ENCODE measurements at regions of chr3 and their contacts with region 1.

Region 1: GRCh38 chr3:9503283-9503682 is 50.3 kb downstream of the LHFPL4 start:
- DNase-seq: peak; percentile 21
- ATAC-seq: peak; percentile 76
- H3K4me3 ChIP-seq: no peak overlapping the region
- H3K27ac ChIP-seq: no peak overlapping the region
- H3K4me1 ChIP-seq: peaks cover 2% of the 10 kb centered on the region; the same call in 1 of the 2 replicates
- H3K27me3 ChIP-seq: peaks cover 1 to 8% of the 10 kb centered on the region in 2 experiments
- CTCF ChIP-seq: peak; percentile 87 to 96 (median 95)
- EP300 ChIP-seq: no peak
- POLR2A ChIP-seq: no peak
- RAD21 ChIP-seq: peak; percentile 91

Region 2: GRCh38 chr3:9022305-9023225 is 480.7 kb before region 1 on chr3:
- CTCF ChIA-PET with region 1: no interaction called
- POLR2A ChIA-PET with region 1: no interaction called
- RAD21 ChIA-PET with region 1: no interaction called
- SMC1A ChIA-PET with region 1: no interaction called
- in situ Hi-C with region 1: no loop called
- intact Hi-C with region 1: no loop called
- DNase-seq: no peak
- ATAC-seq: no peak
- H3K4me3 ChIP-seq: no peak overlapping the region
- H3K27ac ChIP-seq: no peak overlapping the region
- H3K4me1 ChIP-seq: no peaks in the 10 kb centered on the region
- H3K27me3 ChIP-seq: peaks cover 0 to 5% of the 10 kb centered on the region in 2 experiments; a peak in 2 of 4 replicates
- CTCF ChIP-seq: no peak
- EP300 ChIP-seq: no peak
- POLR2A ChIP-seq: no peak
- RAD21 ChIP-seq: no peak

Region 3: DNA sequence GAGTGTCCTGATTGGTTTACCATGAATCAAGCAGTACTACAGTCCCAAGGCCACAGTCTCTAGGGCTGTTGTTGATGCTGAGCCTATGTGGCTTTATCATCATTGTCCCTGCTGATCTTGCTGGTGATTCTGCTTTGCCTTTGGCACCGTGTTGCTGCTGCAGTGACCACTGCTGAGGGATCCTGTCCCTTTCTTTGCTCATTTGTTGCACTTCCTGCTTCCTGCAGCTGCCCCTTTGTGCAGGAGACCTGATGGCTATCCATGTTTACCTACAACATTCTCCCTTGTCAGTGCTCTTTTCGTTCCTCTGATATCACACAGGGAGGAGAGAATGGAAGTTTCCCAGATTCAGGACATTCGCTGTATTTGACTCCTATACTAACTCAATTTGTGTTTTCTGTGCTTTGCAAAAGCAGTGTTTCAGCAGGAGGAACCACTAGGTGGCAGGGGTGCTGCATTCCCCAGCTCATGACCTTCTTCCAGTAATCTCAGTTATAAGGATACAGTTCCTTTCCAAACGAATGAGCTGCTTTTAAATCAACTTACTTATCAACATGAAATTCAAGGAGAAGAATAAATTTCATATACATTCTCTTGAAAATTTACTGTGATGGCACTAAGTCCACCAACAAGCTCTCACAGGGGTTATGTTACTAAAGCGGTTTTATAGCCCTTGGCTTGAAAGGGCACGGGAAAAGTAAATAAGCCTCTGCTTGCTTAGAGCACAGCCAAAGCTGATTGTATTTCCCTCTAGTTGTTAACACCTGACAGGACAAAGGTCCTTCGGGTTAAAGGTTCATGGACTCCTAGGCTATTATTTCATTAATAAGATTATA is 150.1 kb before region 1 on chr3:
- CTCF ChIA-PET with region 1: interaction called, 8 read pairs
- POLR2A ChIA-PET with region 1: no interaction called
- RAD21 ChIA-PET with region 1: interaction called, 9 read pairs
- SMC1A ChIA-PET with region 1: interaction called, 13 read pairs
- in situ Hi-C with region 1: no loop called
- intact Hi-C with region 1: loop called (anchors 2 kb)
- DNase-seq: peak; percentile 9
- ATAC-seq: peak; percentile 90
- H3K4me3 ChIP-seq: no peak overlapping the region
- H3K27ac ChIP-seq: no peak overlapping the region
- H3K4me1 ChIP-seq: peaks cover 5% of the 10 kb centered on the region; the same call in 1 of the 2 replicates
- H3K27me3 ChIP-seq: no peaks in the 10 kb centered on the region
- CTCF ChIP-seq: peak; percentile 83 to 94 (median 93)
- EP300 ChIP-seq: no peak
- POLR2A ChIP-seq: no peak
- RAD21 ChIP-seq: peak; percentile 89

Region 4: DNA sequence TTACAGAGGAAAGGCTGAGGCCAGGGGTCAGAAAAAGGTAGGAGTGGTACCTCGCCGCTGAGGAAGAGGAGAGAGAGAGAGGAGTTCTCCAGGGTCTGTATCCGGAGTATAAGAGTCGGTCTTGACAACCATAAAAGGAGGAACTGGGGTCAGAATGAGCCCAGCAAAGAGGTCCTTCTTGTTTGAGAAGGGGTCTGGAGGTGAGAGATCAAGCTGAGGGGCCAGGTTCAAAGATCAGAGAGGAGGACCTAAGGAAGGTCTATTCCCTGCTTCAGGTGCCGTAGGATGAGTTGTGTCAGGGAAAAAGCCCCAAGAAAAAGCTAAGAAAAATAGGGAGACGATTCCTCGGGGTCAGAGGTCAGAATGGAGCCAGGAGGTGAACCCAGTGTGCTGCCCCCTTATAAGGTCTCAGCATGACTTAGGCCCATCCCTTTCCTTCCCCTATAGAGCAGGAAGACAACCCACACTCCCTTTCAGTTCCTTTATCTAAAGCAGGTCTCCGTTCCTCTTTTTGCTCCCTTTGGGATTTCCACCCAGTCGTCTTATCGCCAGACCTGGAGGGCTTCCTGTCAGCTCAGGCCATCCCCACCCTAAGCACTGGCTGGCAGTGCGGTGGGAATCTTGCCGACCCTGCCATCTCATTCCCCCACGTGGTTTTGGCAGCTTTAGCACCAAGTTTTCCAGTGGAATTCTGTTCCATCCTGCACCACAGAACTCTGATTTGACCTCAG is 146.7 kb after region 1 on chr3:
- CTCF ChIA-PET with region 1: interaction called, 6 read pairs
- POLR2A ChIA-PET with region 1: no interaction called
- RAD21 ChIA-PET with region 1: interaction called, 5 read pairs
- SMC1A ChIA-PET with region 1: interaction called, 3 read pairs
- in situ Hi-C with region 1: no loop called
- intact Hi-C with region 1: loop called (anchors 5 kb)
- DNase-seq: peak; percentile 47
- ATAC-seq: peak; percentile 76
- H3K4me3 ChIP-seq: peak overlapping the region; percentile 98
- H3K27ac ChIP-seq: peak overlapping the region; percentile 85
- H3K4me1 ChIP-seq: peaks cover 24% of the 10 kb centered on the region
- H3K27me3 ChIP-seq: no peaks in the 10 kb centered on the region
- CTCF ChIP-seq: no peak
- EP300 ChIP-seq: peak; percentile 31 to 78; a peak in 3 of 4 replicates
- POLR2A ChIP-seq: peak; percentile 22; the same call in 1 of the 2 replicates
- RAD21 ChIP-seq: no peak

Region 5: DNA sequence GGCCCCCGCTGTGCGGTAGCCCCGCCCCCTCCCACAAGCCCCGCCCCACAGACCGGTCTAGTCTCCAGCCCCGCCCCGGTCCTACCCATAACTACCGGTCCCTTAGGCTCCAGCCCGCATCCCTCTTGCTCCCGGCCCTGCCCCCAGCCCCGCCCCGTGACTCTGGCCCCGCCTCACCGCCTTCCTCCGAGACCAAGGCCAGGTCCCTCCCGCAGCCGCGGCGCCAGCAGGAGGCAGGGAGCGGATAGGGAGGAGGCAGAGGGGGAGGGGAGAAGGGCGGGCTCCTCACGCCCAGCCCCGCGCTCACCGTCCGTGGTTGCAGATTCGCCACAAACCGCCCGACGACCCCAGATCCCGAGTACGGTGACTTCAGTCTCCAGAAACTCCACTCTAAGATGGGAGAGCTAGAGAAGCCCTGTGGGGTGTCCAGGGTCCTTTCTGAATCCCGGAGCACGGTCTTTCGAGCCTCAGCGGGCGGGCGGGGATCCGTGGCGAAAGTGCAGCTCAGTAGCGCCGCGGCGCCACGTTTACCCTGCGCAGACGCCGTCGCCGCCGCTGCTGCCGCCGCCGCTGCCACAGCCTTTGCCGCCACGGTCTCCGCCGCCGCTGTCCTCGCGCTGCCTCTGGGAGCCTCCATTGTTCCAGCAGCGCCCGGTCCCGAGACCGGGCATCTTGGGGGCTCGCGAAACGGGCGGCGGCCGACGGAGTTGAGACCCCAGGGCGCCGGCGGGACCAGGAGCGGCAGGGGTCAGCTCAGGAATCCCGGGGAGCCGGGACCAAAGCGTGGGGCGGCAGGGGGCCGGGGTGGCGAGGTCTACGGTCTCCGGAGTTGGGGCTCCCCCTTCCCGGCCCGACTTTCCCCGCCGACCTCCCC is 228.2 kb after region 1 on chr3 and contains the start of gene BRPF1:
- CTCF ChIA-PET with region 1: interaction called, 45 read pairs
- POLR2A ChIA-PET with region 1: no interaction called
- RAD21 ChIA-PET with region 1: interaction called, 3 read pairs
- SMC1A ChIA-PET with region 1: interaction called, 6 read pairs
- in situ Hi-C with region 1: loop called (anchors 5 kb)
- intact Hi-C with region 1: loop called (anchors 1 kb)
- DNase-seq: peak; percentile 90
- ATAC-seq: peak; percentile 97
- H3K4me3 ChIP-seq: peak within 1 kb of the TSS; percentile 94
- H3K27ac ChIP-seq: peak within 1 kb of the TSS; percentile 100
- H3K4me1 ChIP-seq: peaks cover 12% of the 10 kb centered on the region
- H3K27me3 ChIP-seq: no peaks in the 10 kb centered on the region
- CTCF ChIP-seq: no peak
- EP300 ChIP-seq: peak in 1 of 2 experiments; percentile 99; a peak in 2 of 4 replicates
- POLR2A ChIP-seq: peak; percentile 92
- RAD21 ChIP-seq: no peak
- polyA plus RNA-seq, gene BRPF1: 1.2 to 1.4 TPM